Kidney (tissue), 22 donors: ENCODE measurements at regions of chr4 and their contacts with region 1.

Region 1: GRCh38 chr4:158845311-158846041 is 76.7 kb downstream of the FNIP2 start:
- DNase-seq: no peak
- H3K4me3 ChIP-seq: no peak overlapping the region
- H3K27ac ChIP-seq: no peak overlapping the region
- H3K4me1 ChIP-seq: peaks cover 0 to 6% (median 2%) of the 10 kb centered on the region in 3 donors
- H3K27me3 ChIP-seq: no peaks in the 10 kb centered on the region
- CTCF ChIP-seq: no peak

Region 2: GRCh38 chr4:158729716-158730559 is 115.5 kb before region 1 on chr4:
- intact Hi-C with region 1: loop called (anchors 10 kb)
- DNase-seq: peak in 4 of 5 donors; percentile 54 to 81 (median 62)
- H3K4me3 ChIP-seq: no peak overlapping the region
- H3K27ac ChIP-seq: no peak overlapping the region
- H3K4me1 ChIP-seq: no peaks in the 10 kb centered on the region
- H3K27me3 ChIP-seq: peaks cover 2% of the 10 kb centered on the region
- CTCF ChIP-seq: peak; percentile 98